WTC11 (cell line): ENCODE measurements at regions of chr7 and their contacts with region 1.

Region 1: GRCh38 chr7:121547544-121548092 is 151.5 kb upstream of the FAM3C start:
- DNase-seq: no peak
- ATAC-seq: peak; percentile 81
- H3K4me3 Mint-ChIP-seq: no peak overlapping the region
- H3K27ac Mint-ChIP-seq: no peak overlapping the region
- H3K4me1 Mint-ChIP-seq: peaks cover 4% of the 10 kb centered on the region
- H3K27me3 Mint-ChIP-seq: no peaks in the 10 kb centered on the region
- CTCF ChIP-seq: peak; percentile 39

Region 2: GRCh38 chr7:121366852-121367431 is 180.7 kb before region 1 on chr7:
- CTCF ChIA-PET with region 1: interaction called, 24 read pairs
- POLR2A ChIA-PET with region 1: no interaction called
- DNase-seq: no peak
- ATAC-seq: no peak
- H3K4me3 Mint-ChIP-seq: no peak overlapping the region
- H3K27ac Mint-ChIP-seq: no peak overlapping the region
- H3K4me1 Mint-ChIP-seq: peaks cover 14% of the 10 kb centered on the region
- H3K27me3 Mint-ChIP-seq: no peaks in the 10 kb centered on the region
- CTCF ChIP-seq: peak; percentile 51; the same call in 1 of the 2 replicates

Region 3: GRCh38 chr7:121504478-121504877 is 43.1 kb before region 1 on chr7:
- CTCF ChIA-PET with region 1: no interaction called
- POLR2A ChIA-PET with region 1: no interaction called
- DNase-seq: no peak
- ATAC-seq: peak; percentile 48; the same call in 1 of the 2 replicates
- H3K4me3 Mint-ChIP-seq: no peak overlapping the region
- H3K27ac Mint-ChIP-seq: no peak overlapping the region; the same call in 1 of the 2 replicates
- H3K4me1 Mint-ChIP-seq: peaks cover 19% of the 10 kb centered on the region
- H3K27me3 Mint-ChIP-seq: no peaks in the 10 kb centered on the region; the same call in 1 of the 2 replicates
- CTCF ChIP-seq: no peak